B cell (primary cell): ENCODE measurements at regions of chr7 and their contacts with region 1.

Region 1: GRCh38 chr7:157336383-157337315 is at the start of gene DNAJB6:
- DNase-seq: peak; percentile 98
- ATAC-seq: peak; percentile 86
- H3K4me3 ChIP-seq: peak within 1 kb of the TSS; percentile 63 to 96 (median 81)
- H3K4me3 Mint-ChIP-seq: peak within 1 kb of the TSS; percentile 99
- H3K27ac ChIP-seq: peak within 1 kb of the TSS; percentile 93 to 94
- H3K27ac Mint-ChIP-seq: peak within 1 kb of the TSS; percentile 100
- H3K4me1 ChIP-seq: peaks cover 39 to 47% of the 10 kb centered on the region in 2 donors
- H3K4me1 Mint-ChIP-seq: peaks cover 65% of the 10 kb centered on the region
- H3K27me3 ChIP-seq: no peaks in the 10 kb centered on the region
- H3K27me3 Mint-ChIP-seq: no peaks in the 10 kb centered on the region
- CTCF ChIP-seq: no peak
- total RNA-seq, gene DNAJB6: 104 and 116 TPM in 2 replicates

Region 2: DNA sequence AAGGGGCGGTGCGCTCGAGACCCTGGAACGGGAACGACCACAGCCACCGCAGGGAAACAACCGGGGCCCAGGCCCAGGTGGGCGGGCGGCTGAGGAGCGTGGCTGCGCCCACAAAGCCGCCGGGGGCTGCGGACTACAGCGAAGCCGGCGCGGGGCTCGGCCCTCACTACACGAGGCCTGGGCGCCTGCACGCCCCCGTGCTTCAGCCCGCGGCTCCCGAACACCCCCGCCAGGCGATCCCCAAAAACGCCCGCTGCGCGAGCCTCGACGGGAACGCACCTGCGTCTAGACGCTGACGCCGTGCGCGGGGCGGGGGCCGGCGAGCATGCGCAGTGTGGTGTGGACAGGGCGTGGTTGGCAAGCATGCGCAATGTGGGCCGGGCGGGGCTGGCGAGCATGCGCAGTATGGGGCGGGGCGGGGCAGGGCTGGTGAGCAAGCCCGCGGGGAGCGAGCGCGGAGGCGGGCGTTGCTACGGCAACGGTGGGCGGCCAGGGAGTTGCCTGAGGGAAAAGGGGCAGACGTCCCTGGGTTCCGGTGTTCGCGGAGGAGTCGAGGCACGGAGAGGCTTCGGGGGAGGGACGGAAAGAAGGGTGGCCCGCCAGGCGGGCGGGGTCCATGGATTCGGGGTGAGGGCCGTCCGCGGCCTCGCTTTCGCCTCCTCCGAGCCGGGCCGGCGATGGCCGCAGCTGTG is 696.2 kb before region 1 on chr7 and contains the start of gene RNF32:
- CTCF ChIA-PET with region 1: no interaction called
- POLR2A ChIA-PET with region 1: no interaction called
- intact Hi-C with region 1: loop called (anchors 5 kb)
- DNase-seq: peak; percentile 98
- ATAC-seq: peak; percentile 82
- H3K4me3 ChIP-seq: peak within 1 kb of the TSS in 4 of 5 experiments; percentile 64 to 96 (median 85)
- H3K4me3 Mint-ChIP-seq: peak within 1 kb of the TSS; percentile 96
- H3K27ac ChIP-seq: peak within 1 kb of the TSS; percentile 80 to 98
- H3K27ac Mint-ChIP-seq: peak within 1 kb of the TSS; percentile 97
- H3K4me1 ChIP-seq: peaks cover 11 to 26% of the 10 kb centered on the region in 2 donors
- H3K4me1 Mint-ChIP-seq: peaks cover 36% of the 10 kb centered on the region
- H3K27me3 ChIP-seq: peaks cover 0 to 4% (median 0%) of the 10 kb centered on the region in 4 experiments
- H3K27me3 Mint-ChIP-seq: no peaks in the 10 kb centered on the region
- CTCF ChIP-seq: no peak
- total RNA-seq, gene RNF32: 2.3 and 3.4 TPM in 2 replicates

Region 3: GRCh38 chr7:156949541-156950380 is 386.9 kb before region 1 on chr7 and contains the start of gene NOM1:
- CTCF ChIA-PET with region 1: no interaction called
- POLR2A ChIA-PET with region 1: no interaction called
- intact Hi-C with region 1: loop called (anchors 2 kb)
- DNase-seq: peak; percentile 93
- ATAC-seq: peak; percentile 95
- H3K4me3 ChIP-seq: peak within 1 kb of the TSS; percentile 49 to 93 (median 73)
- H3K4me3 Mint-ChIP-seq: peak within 1 kb of the TSS; percentile 96
- H3K27ac ChIP-seq: peak within 1 kb of the TSS in 1 of 2 donors; percentile 65
- H3K27ac Mint-ChIP-seq: peak within 1 kb of the TSS; percentile 68
- H3K4me1 ChIP-seq: peaks cover 16 to 31% of the 10 kb centered on the region in 2 donors
- H3K4me1 Mint-ChIP-seq: peaks cover 20% of the 10 kb centered on the region
- H3K27me3 ChIP-seq: peaks cover 0 to 1% (median 0%) of the 10 kb centered on the region in 4 experiments
- H3K27me3 Mint-ChIP-seq: peaks cover 4% of the 10 kb centered on the region
- CTCF ChIP-seq: peak; percentile 74
- total RNA-seq, gene NOM1: 38.3 and 41.0 TPM in 2 replicates

Region 4: GRCh38 chr7:157273208-157274093 is 63.2 kb before region 1 on chr7:
- CTCF ChIA-PET with region 1: interaction called, 5 read pairs
- POLR2A ChIA-PET with region 1: no interaction called
- intact Hi-C with region 1: loop called (anchors 1 kb)
- DNase-seq: peak; percentile 72
- ATAC-seq: peak; percentile 96
- H3K4me3 ChIP-seq: no peak overlapping the region
- H3K4me3 Mint-ChIP-seq: no peak overlapping the region
- H3K27ac ChIP-seq: no peak overlapping the region
- H3K27ac Mint-ChIP-seq: no peak overlapping the region
- H3K4me1 ChIP-seq: peaks cover 0 to 8% of the 10 kb centered on the region in 2 donors
- H3K4me1 Mint-ChIP-seq: peaks cover 3% of the 10 kb centered on the region
- H3K27me3 ChIP-seq: peaks cover 0 to 10% (median 0%) of the 10 kb centered on the region in 4 experiments
- H3K27me3 Mint-ChIP-seq: peaks cover 3% of the 10 kb centered on the region
- CTCF ChIP-seq: peak; percentile 96

Region 5: GRCh38 chr7:157284229-157285014 is 52.2 kb before region 1 on chr7:
- CTCF ChIA-PET with region 1: no interaction called
- POLR2A ChIA-PET with region 1: no interaction called
- intact Hi-C with region 1: no loop called
- DNase-seq: no peak
- ATAC-seq: no peak
- H3K4me3 ChIP-seq: no peak overlapping the region
- H3K4me3 Mint-ChIP-seq: no peak overlapping the region
- H3K27ac ChIP-seq: no peak overlapping the region
- H3K27ac Mint-ChIP-seq: no peak overlapping the region
- H3K4me1 ChIP-seq: peaks cover 6 to 7% of the 10 kb centered on the region in 2 donors
- H3K4me1 Mint-ChIP-seq: peaks cover 2% of the 10 kb centered on the region
- H3K27me3 ChIP-seq: peaks cover 0 to 16% (median 1%) of the 10 kb centered on the region in 4 experiments
- H3K27me3 Mint-ChIP-seq: no peaks in the 10 kb centered on the region
- CTCF ChIP-seq: no peak

Region 6: DNA sequence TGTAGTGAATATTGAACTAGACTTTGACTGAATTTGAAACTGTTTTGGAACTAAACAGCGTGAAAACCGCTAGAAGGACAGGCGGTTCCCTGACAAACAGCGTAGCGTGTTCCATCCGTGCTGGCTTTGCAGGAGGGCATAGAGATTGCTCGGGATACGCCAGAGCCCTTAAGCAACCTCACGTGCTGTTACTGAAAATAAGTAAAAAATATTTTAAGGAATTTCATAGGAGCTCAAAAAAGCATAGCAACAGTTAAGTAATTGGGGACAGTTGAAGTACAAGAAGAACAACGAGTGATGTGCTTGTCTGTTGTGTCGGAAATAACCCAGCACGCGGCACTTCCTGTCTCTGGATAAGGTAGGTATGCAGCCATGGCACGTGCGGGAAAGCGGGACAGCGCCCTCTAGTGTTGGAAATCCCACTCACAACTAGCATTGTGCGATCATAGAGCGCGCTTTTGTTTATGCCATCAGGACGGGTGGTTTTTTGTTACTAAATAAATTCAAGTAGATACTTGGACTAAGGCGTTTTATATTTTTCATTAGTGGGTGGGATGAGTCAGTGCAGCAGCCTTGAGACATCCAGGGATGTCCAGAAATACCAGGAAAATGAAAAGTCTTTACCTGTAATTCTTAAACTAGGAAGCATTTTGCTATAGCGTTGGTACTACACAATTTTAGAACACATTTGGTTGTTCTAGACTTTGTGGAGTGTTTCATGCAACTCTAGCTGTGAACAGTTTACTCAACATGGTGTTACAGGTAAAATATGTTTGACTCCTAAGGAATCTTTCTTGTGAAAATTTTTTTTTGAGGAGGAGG is 50.5 kb after region 1 on chr7:
- CTCF ChIA-PET with region 1: interaction called, 4 read pairs
- POLR2A ChIA-PET with region 1: no interaction called
- intact Hi-C with region 1: loop called (anchors 2 kb)
- DNase-seq: peak; percentile 84
- ATAC-seq: peak; percentile 85
- H3K4me3 ChIP-seq: no peak overlapping the region
- H3K4me3 Mint-ChIP-seq: peak overlapping the region; percentile 58
- H3K27ac ChIP-seq: peak overlapping the region; percentile 25 to 74
- H3K27ac Mint-ChIP-seq: peak overlapping the region; percentile 72
- H3K4me1 ChIP-seq: peaks cover 4 to 20% of the 10 kb centered on the region in 2 donors
- H3K4me1 Mint-ChIP-seq: peaks cover 8% of the 10 kb centered on the region
- H3K27me3 ChIP-seq: no peaks in the 10 kb centered on the region
- H3K27me3 Mint-ChIP-seq: no peaks in the 10 kb centered on the region
- CTCF ChIP-seq: peak; percentile 92